A549 (cell line): ENCODE measurements at regions of chr10 and their contacts with region 1.

Region 1: DNA sequence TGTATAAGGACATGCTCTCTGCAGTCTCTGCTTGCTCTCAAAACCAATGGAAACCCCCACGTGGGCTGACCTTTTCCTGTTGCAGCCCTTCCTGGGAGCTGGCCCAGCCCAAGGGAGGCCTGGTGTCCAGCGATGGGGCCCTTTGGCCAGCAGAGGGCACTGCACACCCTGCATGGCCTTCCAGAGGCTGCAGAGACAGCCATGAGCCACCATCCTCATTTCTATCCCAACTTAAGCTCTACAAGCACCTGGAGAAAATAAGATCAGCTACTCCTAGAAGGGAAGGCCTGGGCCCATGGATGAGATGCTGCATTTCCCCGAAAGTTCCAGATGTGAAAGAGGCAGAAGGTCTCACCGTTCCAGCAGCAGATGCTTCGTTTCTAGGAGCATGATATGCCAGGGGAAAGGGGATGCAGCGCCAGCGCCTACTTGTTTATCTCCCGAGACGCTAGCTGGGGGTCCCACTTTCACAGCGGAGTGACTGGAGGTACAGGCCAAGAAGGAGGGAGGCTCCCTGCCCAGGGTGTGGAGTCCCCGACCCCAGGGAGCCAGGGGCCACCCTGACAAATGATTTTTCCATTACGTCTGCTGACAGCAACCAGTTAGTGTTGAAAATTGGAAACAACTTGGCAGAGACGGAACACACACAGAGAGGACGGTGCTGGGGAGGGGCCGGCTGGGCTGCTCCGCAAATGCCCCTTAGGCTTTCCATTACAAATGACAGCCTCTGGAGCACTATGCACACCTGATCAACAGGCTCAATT is 106.4 kb downstream of the ZRANB1 start:
- DNase-seq: peak; percentile 86 to 92
- ATAC-seq: peak; percentile 96 to 97
- H3K4me3 ChIP-seq: no peak overlapping the region
- H3K27ac ChIP-seq: peak overlapping the region; percentile 70 to 85
- H3K4me1 ChIP-seq: peaks cover 37% of the 10 kb centered on the region
- CTCF ChIP-seq: peak; percentile 94
- EP300 ChIP-seq: no peak
- POLR2A ChIP-seq: no peak
- RAD21 ChIP-seq: peak; percentile 87 to 88

Region 2: GRCh38 chr10:125018576-125019143 is 29.6 kb before region 1 on chr10:
- CTCF ChIA-PET with region 1: interaction called, 10 read pairs
- POLR2A ChIA-PET with region 1: no interaction called
- DNase-seq: no peak
- ATAC-seq: no peak
- H3K4me3 ChIP-seq: no peak overlapping the region
- H3K27ac ChIP-seq: no peak overlapping the region
- H3K4me1 ChIP-seq: no peaks in the 10 kb centered on the region
- CTCF ChIP-seq: no peak
- EP300 ChIP-seq: no peak
- POLR2A ChIP-seq: no peak
- RAD21 ChIP-seq: no peak

Region 3: DNA sequence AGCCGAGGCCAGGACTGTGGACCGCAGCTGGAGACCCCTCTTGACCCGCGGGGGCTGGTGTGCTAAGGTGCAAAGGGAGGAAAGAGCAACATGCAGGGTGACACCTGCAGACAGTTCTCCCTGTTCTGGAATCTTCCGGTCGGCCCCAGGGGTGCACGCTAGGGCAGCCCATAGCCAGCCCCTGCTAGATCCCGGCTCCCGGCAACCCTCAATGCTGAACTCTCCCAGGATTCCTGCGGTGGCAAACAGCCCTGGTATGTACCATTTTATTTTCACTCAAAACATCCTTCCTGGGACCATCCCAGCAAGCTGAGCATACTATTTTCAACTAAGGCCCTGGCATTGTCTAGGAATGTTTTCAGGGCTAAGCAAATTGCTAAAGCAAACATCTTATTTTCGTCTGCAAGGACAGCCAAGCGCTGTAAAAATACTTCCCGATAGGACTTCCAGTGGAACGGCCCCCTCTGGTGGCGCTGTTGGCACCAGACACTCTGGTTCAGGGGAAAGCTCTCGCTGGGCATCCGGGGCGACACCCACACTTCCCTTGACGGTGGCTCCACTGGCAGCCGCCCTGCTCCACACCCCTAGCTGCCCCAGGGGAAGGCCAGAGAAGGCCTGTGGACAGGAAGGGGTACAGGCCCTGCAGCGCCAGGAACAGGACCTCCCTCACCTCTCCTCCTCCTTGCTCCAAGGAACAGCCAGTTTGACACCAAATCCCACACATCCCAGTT is 12.7 kb after region 1 on chr10:
- CTCF ChIA-PET with region 1: interaction called, 105 read pairs
- POLR2A ChIA-PET with region 1: no interaction called
- DNase-seq: peak; percentile 64
- ATAC-seq: peak; percentile 91
- H3K4me3 ChIP-seq: no peak overlapping the region
- H3K27ac ChIP-seq: peak overlapping the region; percentile 26 to 73; a peak in 4 of 6 replicates
- H3K4me1 ChIP-seq: peaks cover 25% of the 10 kb centered on the region
- CTCF ChIP-seq: peak; percentile 70
- EP300 ChIP-seq: no peak
- POLR2A ChIP-seq: no peak
- RAD21 ChIP-seq: peak; percentile 63 to 64

Region 4: DNA sequence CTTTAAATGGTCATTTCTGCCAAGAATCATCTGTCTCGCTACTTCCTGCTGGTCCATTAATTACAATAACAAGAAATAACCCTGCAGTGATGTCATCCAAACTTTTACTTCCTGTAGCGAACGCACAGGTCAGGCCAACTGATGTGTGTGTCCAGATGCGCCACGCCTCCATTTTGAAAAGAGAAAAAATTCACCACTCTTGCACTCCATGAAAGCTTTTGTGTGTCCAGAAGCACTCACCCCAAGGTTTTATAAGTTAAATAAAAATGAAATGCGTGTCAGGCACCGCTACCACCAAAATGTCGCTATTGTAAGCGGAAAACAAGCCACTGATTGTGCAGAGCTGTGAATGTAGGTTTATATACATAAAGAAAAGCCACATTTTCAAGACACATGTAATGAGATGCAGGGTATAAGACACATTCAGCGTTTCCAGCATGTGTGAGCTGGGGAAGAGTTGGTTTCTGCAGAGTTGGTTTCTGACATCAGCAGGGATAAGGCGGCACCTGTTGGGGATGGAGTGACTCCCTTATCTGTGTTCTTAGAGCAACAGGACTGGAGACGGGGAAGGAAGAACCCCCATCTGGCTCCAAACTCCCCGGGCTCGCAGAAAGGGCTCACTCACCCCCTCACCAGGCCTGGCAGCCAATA is 28.7 kb after region 1 on chr10:
- CTCF ChIA-PET with region 1: interaction called, 15 read pairs
- POLR2A ChIA-PET with region 1: no interaction called
- DNase-seq: no peak
- ATAC-seq: no peak
- H3K4me3 ChIP-seq: no peak overlapping the region
- H3K27ac ChIP-seq: no peak overlapping the region
- H3K4me1 ChIP-seq: peaks cover 10% of the 10 kb centered on the region; the same call in 2 of the 3 replicates
- CTCF ChIP-seq: no peak
- EP300 ChIP-seq: no peak
- POLR2A ChIP-seq: no peak
- RAD21 ChIP-seq: no peak

Region 5: GRCh38 chr10:125128397-125129075 is 80.3 kb after region 1 on chr10:
- CTCF ChIA-PET with region 1: interaction called, 15 read pairs
- POLR2A ChIA-PET with region 1: no interaction called
- DNase-seq: no peak
- ATAC-seq: no peak
- H3K4me3 ChIP-seq: no peak overlapping the region
- H3K27ac ChIP-seq: peak overlapping the region in 1 of 2 experiments; percentile 10; a peak in 2 of 6 replicates
- H3K4me1 ChIP-seq: peaks cover 47% of the 10 kb centered on the region
- CTCF ChIP-seq: no peak
- EP300 ChIP-seq: no peak
- POLR2A ChIP-seq: no peak
- RAD21 ChIP-seq: no peak

Region 6: GRCh38 chr10:125177968-125178636 is 129.8 kb after region 1 on chr10:
- CTCF ChIA-PET with region 1: no interaction called
- POLR2A ChIA-PET with region 1: no interaction called
- DNase-seq: no peak
- ATAC-seq: no peak
- H3K4me3 ChIP-seq: no peak overlapping the region
- H3K27ac ChIP-seq: no peak overlapping the region
- H3K4me1 ChIP-seq: no peaks in the 10 kb centered on the region
- CTCF ChIP-seq: no peak
- EP300 ChIP-seq: no peak
- POLR2A ChIP-seq: no peak
- RAD21 ChIP-seq: no peak